Activated CD8-positive, alpha-beta memory T cell treated with anti-CD3 and anti-CD28 coated beads, Interleukin-2, amount 10 ng/mL, durations not matched to agents 7 days and 5 days (primary cell): ENCODE measurements at regions of chr6 and their contacts with region 1.

Region 1: DNA sequence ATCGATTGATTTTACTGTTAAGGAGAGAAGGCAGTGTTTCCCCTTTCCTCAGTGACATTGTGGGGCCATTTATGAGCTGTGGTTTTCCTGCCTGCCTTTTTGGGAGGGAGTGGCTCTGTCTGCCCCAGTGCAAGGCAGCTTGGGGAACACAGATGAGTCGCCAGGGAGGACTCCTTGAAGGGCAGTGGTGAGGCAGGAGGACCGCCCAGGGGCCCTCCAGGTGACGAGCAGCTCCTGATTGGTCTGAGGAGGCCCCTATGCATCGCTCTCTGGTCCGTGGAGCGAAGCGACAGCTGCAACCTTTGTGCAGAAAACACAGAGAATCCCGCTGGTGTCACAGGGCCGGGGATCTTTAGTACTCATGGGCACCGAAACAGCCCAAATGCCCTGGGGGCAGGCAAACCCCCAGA is 100.3 kb downstream of the TMEM242 start:
- DNase-seq: peak; percentile 77
- ATAC-seq: peak; percentile 63
- H3K4me3 Mint-ChIP-seq: peak overlapping the region; percentile 0
- H3K27ac Mint-ChIP-seq: peak overlapping the region; percentile 58
- H3K4me1 Mint-ChIP-seq: peaks cover 41% of the 10 kb centered on the region
- H3K27me3 Mint-ChIP-seq: peaks cover 2% of the 10 kb centered on the region

Region 2: GRCh38 chr6:157205473-157206358 is 17.3 kb before region 1 on chr6:
- CTCF ChIA-PET with region 1: no interaction called
- DNase-seq: no peak
- ATAC-seq: no peak
- H3K4me3 Mint-ChIP-seq: no peak overlapping the region
- H3K27ac Mint-ChIP-seq: no peak overlapping the region
- H3K4me1 Mint-ChIP-seq: peaks cover 2% of the 10 kb centered on the region
- H3K27me3 Mint-ChIP-seq: no peaks in the 10 kb centered on the region

Region 3: DNA sequence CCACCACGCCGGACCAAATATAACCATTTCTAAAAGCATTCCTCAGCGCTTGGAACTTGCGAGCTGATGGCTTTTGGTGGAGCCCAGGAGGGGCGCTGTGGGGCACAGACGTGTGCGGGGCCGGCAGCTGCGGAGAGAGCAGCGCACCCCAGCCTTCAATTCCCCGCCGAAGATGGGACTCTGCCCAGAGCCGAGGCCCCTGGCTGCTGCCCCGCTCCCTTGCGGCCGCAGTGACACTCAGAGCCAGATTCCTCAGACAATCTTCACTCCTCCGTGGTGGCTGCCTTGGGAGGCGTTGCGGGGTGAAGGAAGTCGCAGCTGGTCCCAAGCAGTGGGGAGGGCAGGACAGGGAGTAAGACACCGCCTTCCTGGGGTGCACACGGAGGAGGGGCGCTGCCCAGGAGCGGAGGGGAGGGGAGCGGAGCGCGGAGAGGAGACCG is 12.6 kb after region 1 on chr6:
- CTCF ChIA-PET with region 1: interaction called, 10 read pairs
- DNase-seq: peak; percentile 54
- ATAC-seq: peak; percentile 78
- H3K4me3 Mint-ChIP-seq: peak overlapping the region; percentile 76
- H3K27ac Mint-ChIP-seq: no peak overlapping the region
- H3K4me1 Mint-ChIP-seq: peaks cover 16% of the 10 kb centered on the region
- H3K27me3 Mint-ChIP-seq: peaks cover 58% of the 10 kb centered on the region

Region 4: GRCh38 chr6:157267109-157267611 is 44.1 kb after region 1 on chr6:
- CTCF ChIA-PET with region 1: no interaction called
- DNase-seq: no peak
- ATAC-seq: no peak
- H3K4me3 Mint-ChIP-seq: no peak overlapping the region
- H3K27ac Mint-ChIP-seq: no peak overlapping the region
- H3K4me1 Mint-ChIP-seq: peaks cover 4% of the 10 kb centered on the region
- H3K27me3 Mint-ChIP-seq: peaks cover 13% of the 10 kb centered on the region

Region 5: GRCh38 chr6:157328108-157328692 is 105.2 kb after region 1 on chr6:
- CTCF ChIA-PET with region 1: no interaction called
- DNase-seq: no peak
- ATAC-seq: no peak
- H3K4me3 Mint-ChIP-seq: no peak overlapping the region
- H3K27ac Mint-ChIP-seq: no peak overlapping the region
- H3K4me1 Mint-ChIP-seq: peaks cover 43% of the 10 kb centered on the region
- H3K27me3 Mint-ChIP-seq: peaks cover 53% of the 10 kb centered on the region

Region 6: DNA sequence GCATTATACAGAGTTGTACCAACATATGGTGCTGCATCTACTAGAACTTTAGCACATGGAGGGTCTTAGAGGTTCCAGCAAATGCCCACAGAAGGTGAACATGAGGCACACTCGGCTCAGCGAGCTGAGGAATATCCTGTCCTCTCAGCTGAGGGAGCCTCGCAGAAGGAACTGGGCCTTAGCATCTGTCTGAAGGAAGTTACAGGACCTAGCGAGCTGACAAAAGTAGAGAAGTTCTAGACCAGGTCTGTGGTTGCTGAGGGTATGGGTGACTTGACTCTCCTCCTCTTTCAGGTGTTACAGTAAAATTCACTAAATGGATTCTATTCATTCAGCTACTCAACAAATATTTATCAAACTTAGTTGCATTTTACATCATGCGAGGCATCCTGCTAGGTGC is 315.1 kb after region 1 on chr6:
- CTCF ChIA-PET with region 1: no interaction called
- DNase-seq: peak; percentile 68
- ATAC-seq: no peak
- H3K4me3 Mint-ChIP-seq: no peak overlapping the region
- H3K27ac Mint-ChIP-seq: peak overlapping the region; percentile 52
- H3K4me1 Mint-ChIP-seq: peaks cover 56% of the 10 kb centered on the region
- H3K27me3 Mint-ChIP-seq: peaks cover 9% of the 10 kb centered on the region